Activated naive CD4-positive, alpha-beta T cell treated with anti-CD3 and anti-CD28 coated beads for 36 hours (primary cell): ENCODE measurements at regions of chr9 and their contacts with region 1.

Region 1: GRCh38 chr9:121439711-121440664 is 59.7 kb downstream of the GGTA1 start:
- DNase-seq: no peak
- H3K4me3 Mint-ChIP-seq: no peak overlapping the region
- H3K27ac Mint-ChIP-seq: no peak overlapping the region
- H3K4me1 Mint-ChIP-seq: no peaks in the 10 kb centered on the region
- H3K27me3 Mint-ChIP-seq: peaks cover 9% of the 10 kb centered on the region

Region 2: GRCh38 chr9:121498150-121498486 is 58.1 kb after region 1 on chr9:
- CTCF ChIA-PET with region 1: no interaction called
- intact Hi-C with region 1: loop called (anchors 10 kb)
- DNase-seq: peak; percentile 69
- H3K4me3 Mint-ChIP-seq: peak overlapping the region; percentile 61
- H3K27ac Mint-ChIP-seq: no peak overlapping the region
- H3K4me1 Mint-ChIP-seq: peaks cover 19% of the 10 kb centered on the region
- H3K27me3 Mint-ChIP-seq: peaks cover 52% of the 10 kb centered on the region